AG04449 (cell line): ENCODE measurements at regions of chr3 and their contacts with region 1.

Region 1: DNA sequence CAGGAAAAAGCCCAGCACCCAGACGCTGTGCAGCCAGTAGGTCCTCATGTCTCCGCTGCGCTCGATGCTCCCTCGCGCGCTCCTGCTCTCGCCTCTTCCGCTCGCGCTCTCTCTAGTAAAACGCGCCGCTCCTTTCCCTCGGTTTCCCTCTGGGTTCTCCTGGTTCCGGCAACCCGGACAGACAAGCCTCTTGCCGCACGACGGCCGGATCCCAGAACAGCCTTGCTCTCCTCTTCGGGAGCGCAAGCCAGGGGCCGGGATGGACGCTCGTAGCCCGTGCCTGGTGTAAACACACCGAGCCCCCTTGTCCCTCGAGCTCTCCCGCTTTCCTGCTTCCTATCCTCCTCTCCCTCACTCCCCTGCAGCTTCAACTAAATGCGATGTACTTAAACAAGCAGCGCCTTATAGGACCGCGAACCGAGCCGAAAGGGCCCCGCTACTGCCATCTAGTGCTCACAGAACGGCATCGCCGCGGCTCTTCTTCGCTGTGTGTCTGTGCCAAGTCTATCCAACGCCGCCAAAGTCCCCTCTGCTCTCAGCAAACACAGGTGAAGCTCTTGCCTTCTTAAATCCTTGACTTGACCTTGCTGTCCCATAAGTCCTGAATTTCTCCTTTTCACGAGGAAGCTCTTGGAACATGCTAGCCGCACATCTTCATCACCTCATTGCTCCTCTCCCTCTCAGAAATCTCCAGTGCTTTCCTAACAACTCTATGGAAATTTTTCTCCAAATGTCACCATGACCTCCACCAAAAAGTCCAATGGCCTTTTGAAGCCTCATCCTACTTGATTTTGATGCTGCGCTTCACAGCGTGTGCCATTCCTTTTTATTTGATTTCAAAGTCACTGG is 1037.2 kb downstream of the IGSF11 start:
- DNase-seq: peak; percentile 33
- H3K4me3 ChIP-seq: peak overlapping the region; percentile 81
- CTCF ChIP-seq: peak; percentile 93

Region 2: DNA sequence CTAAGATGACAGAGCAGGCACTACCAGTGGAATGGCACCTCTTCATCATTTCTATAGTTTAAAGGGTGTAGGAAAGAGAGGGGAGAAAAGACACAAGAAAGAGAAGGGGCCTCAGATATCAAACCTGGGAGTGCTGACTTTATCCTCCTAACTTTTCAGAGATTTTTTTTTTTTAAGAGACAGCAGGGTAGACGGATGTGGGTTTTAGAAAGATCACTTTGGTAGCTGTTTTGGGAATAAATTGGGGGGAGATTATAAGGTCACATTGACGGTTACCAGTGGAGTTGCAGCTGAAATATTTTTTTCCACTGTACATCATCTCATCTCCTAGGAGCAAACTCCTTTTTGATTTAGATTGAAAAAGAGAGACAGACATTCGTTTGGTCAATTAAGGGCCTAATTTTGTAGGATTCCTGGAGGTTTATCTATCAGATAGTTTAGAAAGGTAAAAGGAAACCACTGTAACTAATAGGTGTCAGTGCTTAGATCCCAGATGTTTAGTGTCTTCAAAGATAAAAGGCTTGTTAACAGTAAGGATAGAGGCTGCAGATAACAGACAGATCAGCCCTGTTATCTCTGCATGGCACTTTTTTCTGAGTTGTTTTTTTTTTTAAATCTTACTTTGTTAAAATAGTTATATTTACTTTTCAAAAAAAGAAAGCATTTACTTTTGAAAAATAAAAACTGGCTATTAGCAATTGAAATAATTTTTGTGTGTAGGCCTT is 19.8 kb before region 1 on chr3:
- CTCF ChIA-PET with region 1: interaction called, 18 read pairs
- POLR2A ChIA-PET with region 1: no interaction called
- DNase-seq: no peak
- H3K4me3 ChIP-seq: no peak overlapping the region
- CTCF ChIP-seq: no peak

Region 3: DNA sequence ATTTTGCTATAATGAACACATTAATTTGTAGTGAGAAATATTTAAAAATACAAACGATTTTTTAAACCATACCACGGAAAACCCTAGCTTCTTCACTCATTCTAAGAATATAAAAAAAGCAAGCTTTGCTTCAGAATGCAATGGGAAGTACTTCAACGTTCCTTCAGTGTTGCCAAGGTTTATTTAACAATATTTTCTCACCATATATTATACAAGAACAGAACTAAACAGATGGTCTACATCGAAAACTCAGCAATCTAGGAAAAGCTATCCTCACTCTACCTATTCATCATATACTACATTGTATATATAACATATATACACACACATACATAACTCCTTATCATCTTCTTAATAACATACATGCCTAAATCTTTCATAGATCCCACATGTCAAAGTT is 10.2 kb before region 1 on chr3:
- CTCF ChIA-PET with region 1: interaction called, 16 read pairs
- POLR2A ChIA-PET with region 1: no interaction called
- DNase-seq: no peak
- H3K4me3 ChIP-seq: no peak overlapping the region
- CTCF ChIP-seq: no peak

Region 4: GRCh38 chr3:118011910-118012309 is 14.5 kb after region 1 on chr3:
- CTCF ChIA-PET with region 1: interaction called, 18 read pairs
- POLR2A ChIA-PET with region 1: no interaction called
- DNase-seq: no peak
- H3K4me3 ChIP-seq: no peak overlapping the region
- CTCF ChIP-seq: no peak